ENCODE measurements at regions of chr1 and their contacts with region 1.

Region 1: GRCh38 chr1:28648474-28649198 is at the start of gene RNU11:
- DNase-seq: peak; percentile 69
- ATAC-seq: peak; percentile 79
- H3K4me3 Mint-ChIP-seq: peak within 1 kb of the TSS; percentile 74
- H3K27ac Mint-ChIP-seq: peak within 1 kb of the TSS; percentile 100
- H3K4me1 Mint-ChIP-seq: peaks cover 18% of the 10 kb centered on the region
- H3K27me3 Mint-ChIP-seq: no peaks in the 10 kb centered on the region
- CTCF ChIP-seq: no peak
- total RNA-seq, gene RNU11: not detected in 3 replicates

Region 2: GRCh38 chr1:28668191-28668955 is 19.7 kb after region 1 on chr1 and contains the start of gene GMEB1:
- CTCF ChIA-PET with region 1: no interaction called
- POLR2A ChIA-PET with region 1: interaction called, 19 read pairs
- DNase-seq: peak; percentile 85
- ATAC-seq: peak; percentile 73
- H3K4me3 Mint-ChIP-seq: peak within 1 kb of the TSS; percentile 87
- H3K27ac Mint-ChIP-seq: peak within 1 kb of the TSS; percentile 99
- H3K4me1 Mint-ChIP-seq: peaks cover 21% of the 10 kb centered on the region
- H3K27me3 Mint-ChIP-seq: no peaks in the 10 kb centered on the region; the same call in 1 of the 2 replicates
- CTCF ChIP-seq: no peak
- total RNA-seq, gene GMEB1: 25.4 to 29.4 TPM (median 26.4 TPM) in 3 replicates

Measured in WTC11 (cell line).